ENCODE measurements at regions of chr14 and their contacts with region 1.

Region 1: GRCh38 chr14:67666750-67667449 is 7.5 kb downstream of the VTI1B start:
- DNase-seq: peak; percentile 21
- H3K4me3 Mint-ChIP-seq: no peak overlapping the region
- H3K27ac Mint-ChIP-seq: no peak overlapping the region
- H3K4me1 Mint-ChIP-seq: no peaks in the 10 kb centered on the region
- H3K27me3 Mint-ChIP-seq: no peaks in the 10 kb centered on the region
- CTCF ChIP-seq: peak; percentile 50

Region 2: DNA sequence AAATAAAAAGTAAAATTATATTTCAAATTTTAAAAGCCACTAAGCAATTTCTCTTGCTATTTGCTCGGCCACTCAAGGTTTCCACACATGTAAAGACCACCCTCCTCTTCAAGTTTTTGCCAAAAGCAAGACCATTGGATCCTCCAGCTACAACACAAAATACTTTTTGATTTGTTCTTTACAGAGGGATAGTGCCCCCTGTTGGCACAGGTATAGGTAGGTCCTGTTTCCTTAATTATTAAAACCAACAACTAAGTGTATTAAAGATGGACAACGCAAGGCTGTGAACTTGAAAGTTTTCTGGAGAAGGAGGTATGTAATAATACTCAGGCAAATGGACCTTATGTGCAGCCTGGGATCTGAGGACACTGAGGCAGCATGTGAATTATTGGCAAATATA is 331.1 kb before region 1 on chr14:
- CTCF ChIA-PET with region 1: interaction called, 11 read pairs
- intact Hi-C with region 1: no loop called
- DNase-seq: peak; percentile 20
- H3K4me3 Mint-ChIP-seq: no peak overlapping the region
- H3K27ac Mint-ChIP-seq: no peak overlapping the region
- H3K4me1 Mint-ChIP-seq: peaks cover 8% of the 10 kb centered on the region
- H3K27me3 Mint-ChIP-seq: no peaks in the 10 kb centered on the region
- CTCF ChIP-seq: no peak

Region 3: DNA sequence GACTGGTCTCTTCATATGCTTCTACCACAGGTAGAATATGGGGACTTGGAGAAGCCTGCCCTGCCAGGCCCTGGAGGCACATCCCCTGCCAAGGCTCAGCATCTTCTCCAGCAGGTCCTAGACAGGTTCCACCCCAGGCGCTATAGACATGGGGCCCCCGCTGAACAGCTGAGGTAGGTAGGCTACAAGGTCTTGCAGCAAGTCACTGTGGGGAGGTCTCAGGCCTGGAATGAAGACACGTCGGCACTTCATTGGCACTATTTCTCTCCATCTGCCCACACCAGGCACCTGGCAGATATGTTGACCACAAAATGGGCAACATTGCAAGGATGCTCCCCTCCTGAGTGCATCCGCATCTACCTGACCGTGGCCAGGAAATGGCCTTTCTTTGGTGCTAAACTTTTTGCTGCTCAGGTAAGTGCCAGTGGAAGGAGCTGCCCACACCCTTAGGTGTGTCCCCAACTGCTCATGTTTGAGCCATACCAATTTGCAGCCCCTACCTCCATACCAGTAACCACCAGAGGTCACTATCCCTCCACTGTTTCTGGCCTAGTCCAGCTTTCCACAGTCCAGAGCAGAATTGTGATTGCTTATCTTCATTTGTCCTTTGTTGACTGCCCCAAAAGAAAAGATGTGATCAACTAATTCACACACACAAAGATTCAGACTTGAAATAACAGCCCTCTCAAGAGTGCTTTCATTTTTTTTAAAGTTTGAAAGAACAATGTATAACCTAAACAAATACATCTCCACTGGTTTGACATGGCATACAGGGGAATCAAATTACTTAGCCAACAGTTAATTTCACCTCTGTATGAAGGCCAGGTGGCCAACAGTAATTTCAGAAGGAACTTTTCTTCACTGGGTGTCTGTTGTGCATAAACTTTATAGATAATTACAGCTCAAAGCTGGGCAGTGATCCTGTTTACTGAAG is 82.9 kb before region 1 on chr14:
- CTCF ChIA-PET with region 1: interaction called, 15 read pairs
- intact Hi-C with region 1: loop called (anchors 1 kb)
- DNase-seq: peak; percentile 70
- H3K4me3 Mint-ChIP-seq: no peak overlapping the region
- H3K27ac Mint-ChIP-seq: no peak overlapping the region
- H3K4me1 Mint-ChIP-seq: no peaks in the 10 kb centered on the region
- H3K27me3 Mint-ChIP-seq: no peaks in the 10 kb centered on the region
- CTCF ChIP-seq: peak; percentile 45

Region 4: DNA sequence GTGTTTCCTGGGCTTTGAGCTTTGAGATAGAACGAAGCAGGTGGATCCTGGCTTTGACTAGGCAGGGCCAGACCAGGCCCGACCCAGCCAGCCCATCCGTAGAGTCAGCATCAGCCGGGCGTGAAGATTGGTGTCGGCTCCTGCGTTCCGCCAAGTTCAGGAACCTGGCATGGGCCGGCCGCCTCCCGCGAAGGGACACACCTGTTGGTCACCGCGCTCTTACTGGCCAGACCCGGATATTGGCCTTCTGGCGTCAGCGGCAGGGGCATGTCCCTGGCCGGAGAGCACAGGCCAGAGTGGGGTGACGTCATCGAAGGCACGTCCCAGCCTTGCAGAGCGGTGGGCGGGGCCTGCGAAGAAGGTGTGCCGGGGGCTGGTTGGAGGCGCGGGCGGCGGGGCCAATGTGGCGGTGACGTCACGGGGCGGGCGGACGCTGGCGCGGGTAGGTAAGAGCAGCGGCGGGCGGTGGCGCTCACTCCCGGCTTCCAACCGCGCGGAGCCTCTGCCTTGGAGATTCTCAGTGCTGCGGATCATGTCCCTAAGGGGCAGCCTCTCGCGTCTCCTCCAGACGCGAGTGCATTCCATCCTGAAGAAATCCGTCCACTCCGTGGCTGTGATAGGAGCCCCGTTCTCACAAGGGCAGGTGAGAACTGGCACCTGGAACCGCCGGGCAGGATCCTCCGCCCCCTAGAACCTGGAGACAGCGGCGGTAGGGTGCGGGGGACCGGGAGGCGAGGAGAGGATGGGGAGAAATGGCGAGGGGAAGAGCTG is 47.3 kb before region 1 on chr14 and contains the start of gene ARG2:
- CTCF ChIA-PET with region 1: interaction called, 23 read pairs
- intact Hi-C with region 1: loop called (anchors 1 kb)
- DNase-seq: peak; percentile 99
- H3K4me3 Mint-ChIP-seq: peak within 1 kb of the TSS; percentile 97
- H3K27ac Mint-ChIP-seq: peak within 1 kb of the TSS; percentile 94
- H3K4me1 Mint-ChIP-seq: peaks cover 21% of the 10 kb centered on the region
- H3K27me3 Mint-ChIP-seq: peaks cover 18% of the 10 kb centered on the region
- CTCF ChIP-seq: no peak
- total RNA-seq, gene ARG2: 11.2 and 18.4 TPM in 2 replicates

Measured in Calu3 (cell line).